A673 (cell line): ENCODE measurements at regions of chr6 and their contacts with region 1.

Region 1: GRCh38 chr6:170516783-170517616 is 36.1 kb downstream of the PSMB1 start:
- DNase-seq: peak; percentile 76
- H3K4me3 ChIP-seq: no peak overlapping the region
- H3K27ac ChIP-seq: no peak overlapping the region
- H3K4me1 ChIP-seq: no peaks in the 10 kb centered on the region
- H3K27me3 ChIP-seq: no peaks in the 10 kb centered on the region
- CTCF ChIP-seq: peak; percentile 84

Region 2: DNA sequence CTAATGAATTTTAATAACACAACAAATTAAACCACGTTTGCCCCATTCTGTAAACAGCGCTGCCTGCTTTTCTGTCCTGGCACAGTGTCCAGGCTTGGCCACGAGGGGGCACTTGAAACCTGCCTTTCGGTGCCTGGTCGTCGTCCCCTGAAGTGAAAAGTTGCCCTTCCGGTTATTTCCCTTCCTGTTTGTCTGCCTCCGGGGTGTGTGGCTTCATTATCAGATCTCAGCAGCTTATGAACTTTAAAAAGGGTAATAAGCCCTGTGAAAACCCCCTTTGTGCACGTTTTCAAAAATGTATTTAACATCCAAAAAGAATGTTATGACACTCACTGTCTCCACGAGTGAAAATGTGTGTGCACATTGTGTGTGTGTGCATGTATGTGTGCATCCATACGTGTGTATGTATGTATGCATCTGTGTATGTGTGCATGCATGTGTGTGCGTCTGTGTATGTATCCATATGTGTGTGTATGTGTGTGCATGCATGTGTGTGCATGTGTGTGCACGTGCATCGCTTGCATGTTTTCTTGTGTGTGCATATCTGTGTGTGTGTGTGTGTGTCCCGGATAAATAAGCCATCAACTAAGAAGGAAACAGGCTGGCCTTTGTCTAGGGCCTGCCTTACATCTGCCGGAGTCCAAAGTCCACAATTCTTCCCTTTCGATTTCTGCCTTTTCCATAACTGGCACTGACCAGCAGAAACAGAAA is 1621.7 kb before region 1 on chr6:
- CTCF ChIA-PET with region 1: no interaction called
- POLR2A ChIA-PET with region 1: no interaction called
- intact Hi-C with region 1: loop called (anchors 5 kb)
- DNase-seq: peak; percentile 83
- H3K4me3 ChIP-seq: no peak overlapping the region
- H3K27ac ChIP-seq: no peak overlapping the region
- H3K4me1 ChIP-seq: no peaks in the 10 kb centered on the region
- H3K27me3 ChIP-seq: peaks cover 12% of the 10 kb centered on the region
- CTCF ChIP-seq: peak; percentile 95

Region 3: GRCh38 chr6:169789982-169790927 is 726.7 kb before region 1 on chr6:
- CTCF ChIA-PET with region 1: interaction called, 6 read pairs
- POLR2A ChIA-PET with region 1: no interaction called
- intact Hi-C with region 1: loop called (anchors 1 kb)
- DNase-seq: peak; percentile 81
- H3K4me3 ChIP-seq: peak overlapping the region; percentile 44
- H3K27ac ChIP-seq: no peak overlapping the region
- H3K4me1 ChIP-seq: peaks cover 15% of the 10 kb centered on the region
- H3K27me3 ChIP-seq: no peaks in the 10 kb centered on the region
- CTCF ChIP-seq: peak; percentile 99

Region 4: GRCh38 chr6:169831450-169832246 is 685.4 kb before region 1 on chr6:
- CTCF ChIA-PET with region 1: interaction called, 14 read pairs
- POLR2A ChIA-PET with region 1: no interaction called
- intact Hi-C with region 1: loop called (anchors 1 kb)
- DNase-seq: peak; percentile 90
- H3K4me3 ChIP-seq: peak overlapping the region; percentile 29
- H3K27ac ChIP-seq: peak overlapping the region; percentile 83
- H3K4me1 ChIP-seq: peaks cover 23% of the 10 kb centered on the region
- H3K27me3 ChIP-seq: no peaks in the 10 kb centered on the region
- CTCF ChIP-seq: peak; percentile 93

Region 5: GRCh38 chr6:169868458-169868857 is 648.5 kb before region 1 on chr6:
- CTCF ChIA-PET with region 1: no interaction called
- POLR2A ChIA-PET with region 1: no interaction called
- intact Hi-C with region 1: no loop called
- DNase-seq: no peak
- H3K4me3 ChIP-seq: no peak overlapping the region
- H3K27ac ChIP-seq: no peak overlapping the region
- H3K4me1 ChIP-seq: no peaks in the 10 kb centered on the region
- H3K27me3 ChIP-seq: no peaks in the 10 kb centered on the region
- CTCF ChIP-seq: no peak